Dendritic cell treated with granulocyte-macrophage colony-stimulating factor and Interleukin-4, amounts not matched to agents 40 ng/mL and 50 ng/mL, for 4 days (primary cell): ENCODE measurements at regions of chr2 and their contacts with region 1.

Region 1: DNA sequence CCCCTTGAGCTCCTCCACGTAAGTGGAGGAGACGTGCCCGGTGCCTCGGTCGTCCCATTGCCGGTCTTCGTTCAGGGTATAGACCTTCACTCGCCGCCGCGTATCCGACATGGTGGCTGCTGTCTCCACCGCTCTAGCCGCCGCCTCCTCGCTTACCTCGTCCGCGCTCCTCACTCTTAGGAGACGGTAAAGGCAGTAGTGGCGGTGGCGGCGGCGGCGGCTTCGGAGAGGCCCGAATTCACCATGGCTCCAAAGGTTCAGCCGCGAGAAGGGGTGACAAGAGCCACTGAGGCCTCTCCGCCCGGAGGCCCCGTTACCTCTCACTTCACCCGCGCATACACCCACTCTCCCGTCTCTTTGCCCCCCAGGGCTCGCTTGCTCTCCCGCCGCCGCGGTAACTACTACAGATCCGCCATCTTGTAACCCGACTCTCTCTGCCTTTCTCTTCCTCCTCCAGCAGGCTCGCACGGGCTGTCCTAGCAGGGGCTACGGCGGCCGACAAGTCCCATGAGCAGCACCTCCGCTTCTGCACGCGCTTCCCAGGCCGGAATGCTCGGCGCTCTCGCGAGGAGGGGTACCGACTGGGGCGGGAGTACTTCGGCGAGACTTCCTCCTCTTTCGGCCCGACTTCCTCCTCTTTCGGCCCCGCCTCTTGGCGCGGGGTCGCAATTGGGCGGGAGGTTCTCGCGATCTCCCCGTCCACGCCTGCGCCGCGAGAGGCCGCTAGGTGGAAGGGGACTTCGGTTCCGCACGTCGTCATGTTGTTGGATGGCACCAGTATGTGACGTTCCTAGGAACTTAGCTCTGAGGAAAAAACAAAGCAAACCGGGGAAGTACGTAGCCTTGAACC is at the start of gene PPP4R3B:
- H3K4me3 Mint-ChIP-seq: no peak within 1 kb of the TSS
- H3K27ac Mint-ChIP-seq: no peak within 1 kb of the TSS
- H3K4me1 Mint-ChIP-seq: peaks cover 11% of the 10 kb centered on the region
- H3K27me3 Mint-ChIP-seq: no peaks in the 10 kb centered on the region

Region 2: GRCh38 chr2:55232084-55232862 is 385.1 kb before region 1 on chr2 and contains the starts of genes CLHC1 and RPS27A:
- intact Hi-C with region 1: loop called (anchors 5 kb)
- H3K4me3 Mint-ChIP-seq: peak within 1 kb of the TSS; percentile 99
- H3K27ac Mint-ChIP-seq: peak within 1 kb of the TSS; percentile 97
- H3K4me1 Mint-ChIP-seq: peaks cover 47% of the 10 kb centered on the region
- H3K27me3 Mint-ChIP-seq: no peaks in the 10 kb centered on the region

Region 3: GRCh38 chr2:55252832-55253231 is 364.6 kb before region 1 on chr2:
- intact Hi-C with region 1: no loop called
- H3K4me3 Mint-ChIP-seq: no peak overlapping the region
- H3K27ac Mint-ChIP-seq: no peak overlapping the region
- H3K4me1 Mint-ChIP-seq: no peaks in the 10 kb centered on the region
- H3K27me3 Mint-ChIP-seq: no peaks in the 10 kb centered on the region

Region 4: GRCh38 chr2:55419679-55420438 is 197.5 kb before region 1 on chr2 and contains the start of gene CCDC88A:
- intact Hi-C with region 1: loop called (anchors 5 kb)
- H3K4me3 Mint-ChIP-seq: peak within 1 kb of the TSS; percentile 99
- H3K27ac Mint-ChIP-seq: peak within 1 kb of the TSS; percentile 98
- H3K4me1 Mint-ChIP-seq: peaks cover 51% of the 10 kb centered on the region
- H3K27me3 Mint-ChIP-seq: no peaks in the 10 kb centered on the region

Region 5: DNA sequence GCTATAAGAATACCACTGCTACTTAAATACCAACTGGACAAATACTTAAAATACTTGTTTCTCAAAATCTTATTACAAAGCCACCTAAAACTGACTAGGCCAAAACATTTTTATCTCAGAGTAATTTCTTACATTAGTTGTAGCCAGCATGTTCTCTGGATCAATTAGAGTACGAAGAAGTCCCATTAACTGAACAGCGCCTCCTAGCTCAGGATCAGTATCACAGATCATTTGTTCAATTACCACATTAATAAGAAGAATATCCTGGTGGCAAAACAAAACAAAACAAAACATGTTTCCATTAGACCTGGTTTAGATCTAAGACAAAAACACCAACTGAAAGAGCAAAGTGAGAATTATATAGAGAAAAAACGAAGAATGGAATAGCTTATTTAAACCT is 36.0 kb before region 1 on chr2:
- intact Hi-C with region 1: no loop called
- H3K4me3 Mint-ChIP-seq: no peak overlapping the region
- H3K27ac Mint-ChIP-seq: peak overlapping the region; percentile 18
- H3K4me1 Mint-ChIP-seq: peaks cover 9% of the 10 kb centered on the region
- H3K27me3 Mint-ChIP-seq: no peaks in the 10 kb centered on the region

Region 6: GRCh38 chr2:55604027-55604565 is 13.3 kb before region 1 on chr2:
- intact Hi-C with region 1: no loop called
- H3K4me3 Mint-ChIP-seq: no peak overlapping the region
- H3K27ac Mint-ChIP-seq: no peak overlapping the region
- H3K4me1 Mint-ChIP-seq: peaks cover 5% of the 10 kb centered on the region
- H3K27me3 Mint-ChIP-seq: no peaks in the 10 kb centered on the region

Region 7: DNA sequence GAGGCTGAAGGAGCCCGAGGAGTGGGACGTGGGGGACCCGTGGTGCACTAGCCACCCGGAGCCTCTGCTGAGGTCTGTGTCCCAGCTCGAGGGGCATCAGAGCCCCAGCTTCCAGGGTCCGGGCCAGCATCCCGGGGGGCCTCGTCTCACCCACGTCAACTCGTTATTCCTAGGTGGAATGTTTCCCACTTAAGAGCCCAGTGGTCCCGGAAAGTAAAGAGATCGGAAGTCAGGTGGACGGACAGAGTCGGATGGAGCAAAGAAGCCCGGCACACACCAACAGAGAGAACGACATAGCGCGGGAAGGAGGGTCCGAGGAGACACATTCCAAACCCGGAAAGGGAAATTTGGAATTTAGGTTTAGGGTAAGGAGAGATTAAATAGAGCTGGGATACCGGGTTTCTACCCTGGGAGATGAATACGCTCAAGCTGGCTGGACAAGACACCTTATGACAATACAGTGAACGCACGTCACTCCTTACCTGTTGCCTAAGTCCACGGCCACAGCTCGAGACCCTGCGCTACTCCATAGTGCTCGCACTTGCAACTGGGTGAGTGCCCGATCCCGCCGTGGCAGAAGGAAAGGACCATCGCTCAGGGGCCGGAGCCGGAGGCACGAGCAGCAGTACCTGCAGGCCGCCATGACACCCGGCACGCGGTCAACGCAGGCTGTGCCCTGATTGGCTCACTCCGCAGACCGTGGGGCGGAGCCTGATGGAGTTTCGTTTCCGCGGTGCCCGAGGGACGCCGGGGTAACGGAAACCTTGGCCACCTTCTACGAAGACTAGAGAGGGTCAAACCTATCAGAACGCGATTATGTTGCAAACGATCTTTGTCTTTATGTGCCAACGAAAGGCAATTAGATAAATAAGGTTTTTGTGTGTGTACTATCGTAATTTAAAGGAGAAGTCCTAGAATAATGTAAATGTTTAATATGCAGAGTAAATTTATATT is 76.1 kb after region 1 on chr2 and contains the start of gene PNPT1:
- intact Hi-C with region 1: loop called (anchors 2 kb)
- H3K4me3 Mint-ChIP-seq: peak within 1 kb of the TSS; percentile 94
- H3K27ac Mint-ChIP-seq: peak within 1 kb of the TSS; percentile 82
- H3K4me1 Mint-ChIP-seq: peaks cover 10% of the 10 kb centered on the region
- H3K27me3 Mint-ChIP-seq: peaks cover 1% of the 10 kb centered on the region